ENCODE measurements at regions of chr12 and their contacts with region 1.

Region 1: DNA sequence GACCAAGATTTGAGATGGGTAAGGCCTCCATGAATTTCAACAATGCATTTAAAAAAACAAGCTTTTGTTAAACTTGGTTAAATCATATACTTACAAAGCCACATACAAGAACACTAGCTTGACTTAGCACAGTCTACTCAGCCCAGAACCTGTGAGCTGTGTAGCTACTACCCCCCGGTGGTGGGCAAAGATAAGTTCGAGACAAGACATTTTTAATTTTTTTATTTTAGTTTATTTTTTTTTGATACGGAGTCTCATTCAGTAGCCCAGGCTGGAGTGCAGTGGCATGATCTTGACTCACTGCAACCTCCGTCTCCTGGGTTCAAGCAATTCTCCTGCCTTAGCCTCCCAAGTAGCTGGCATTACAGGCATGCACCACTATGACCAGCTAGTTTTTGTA is 3.7 kb upstream of the NECAP1 start:
- DNase-seq: peak; percentile 84
- H3K4me3 ChIP-seq: no peak overlapping the region
- H3K27ac ChIP-seq: no peak overlapping the region
- H3K4me1 ChIP-seq: peaks cover 22% of the 10 kb centered on the region
- H3K27me3 ChIP-seq: no peaks in the 10 kb centered on the region
- CTCF ChIP-seq: peak; percentile 28 to 49
- POLR2A ChIP-seq: no peak

Region 2: GRCh38 chr12:7859552-7859951 is 218.8 kb before region 1 on chr12:
- CTCF ChIA-PET with region 1: interaction called, 19 read pairs
- POLR2A ChIA-PET with region 1: no interaction called
- dilution Hi-C with region 1: no loop called
- intact Hi-C with region 1: loop called (anchors 1 kb)
- DNase-seq: no peak
- H3K4me3 ChIP-seq: no peak overlapping the region
- H3K27ac ChIP-seq: no peak overlapping the region
- H3K4me1 ChIP-seq: no peaks in the 10 kb centered on the region
- H3K27me3 ChIP-seq: no peaks in the 10 kb centered on the region
- CTCF ChIP-seq: no peak
- POLR2A ChIP-seq: no peak

Region 3: DNA sequence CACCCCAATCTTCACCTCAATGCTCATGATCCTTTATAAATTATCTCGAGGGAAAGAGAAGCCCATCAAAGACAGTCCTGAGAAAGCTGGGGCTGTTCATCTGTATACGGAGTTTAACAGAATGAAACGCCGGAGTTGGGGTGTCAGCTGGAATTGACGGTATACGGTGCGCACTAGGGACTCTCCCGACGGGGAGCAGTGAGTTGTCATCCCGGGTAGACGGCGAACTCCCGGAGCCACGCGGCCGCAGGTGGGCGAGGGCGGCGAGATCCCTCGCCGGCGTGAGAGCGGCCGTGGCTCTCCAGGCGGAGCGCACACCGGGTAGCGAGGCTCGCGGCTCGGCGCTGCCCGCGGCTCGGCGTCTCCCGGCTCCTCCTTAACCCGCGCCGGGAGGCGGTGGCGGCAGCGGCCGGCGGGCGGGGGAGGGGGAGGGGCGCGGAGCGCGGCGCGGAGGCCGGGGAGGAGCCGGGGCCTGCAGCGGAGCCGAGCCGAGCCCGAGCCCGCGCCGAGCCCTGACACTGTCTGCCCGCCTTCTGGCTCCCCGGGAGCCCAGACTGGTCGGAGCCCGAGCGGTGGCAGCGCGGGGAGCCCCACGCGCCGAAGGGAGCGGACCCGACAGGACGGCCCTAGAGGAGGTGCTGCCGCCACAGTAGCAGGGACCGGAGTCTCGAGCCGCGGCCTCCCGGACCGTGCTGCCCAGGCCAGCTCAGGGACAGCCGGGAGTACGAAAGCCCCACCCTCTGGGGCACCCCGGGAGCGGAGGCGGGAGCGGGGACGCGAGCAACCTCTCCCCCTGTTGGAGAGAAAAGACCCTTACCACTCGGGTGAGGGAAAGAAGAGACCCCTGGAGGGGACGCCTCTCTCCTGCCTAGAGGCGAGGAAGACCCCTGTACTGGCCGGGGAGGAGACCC is 45.9 kb before region 1 on chr12 and contains the start of gene FOXJ2:
- CTCF ChIA-PET with region 1: interaction called, 15 read pairs
- POLR2A ChIA-PET with region 1: no interaction called
- dilution Hi-C with region 1: no loop called
- intact Hi-C with region 1: loop called (anchors 2 kb)
- DNase-seq: peak; percentile 80
- H3K4me3 ChIP-seq: peak within 1 kb of the TSS; percentile 72 to 96 (median 82)
- H3K27ac ChIP-seq: peak within 1 kb of the TSS; percentile 90
- H3K4me1 ChIP-seq: peaks cover 33% of the 10 kb centered on the region
- H3K27me3 ChIP-seq: no peaks in the 10 kb centered on the region
- CTCF ChIP-seq: no peak
- POLR2A ChIP-seq: no peak
- total RNA-seq, gene FOXJ2: 13.3 and 13.9 TPM in 2 replicates

Region 4: DNA sequence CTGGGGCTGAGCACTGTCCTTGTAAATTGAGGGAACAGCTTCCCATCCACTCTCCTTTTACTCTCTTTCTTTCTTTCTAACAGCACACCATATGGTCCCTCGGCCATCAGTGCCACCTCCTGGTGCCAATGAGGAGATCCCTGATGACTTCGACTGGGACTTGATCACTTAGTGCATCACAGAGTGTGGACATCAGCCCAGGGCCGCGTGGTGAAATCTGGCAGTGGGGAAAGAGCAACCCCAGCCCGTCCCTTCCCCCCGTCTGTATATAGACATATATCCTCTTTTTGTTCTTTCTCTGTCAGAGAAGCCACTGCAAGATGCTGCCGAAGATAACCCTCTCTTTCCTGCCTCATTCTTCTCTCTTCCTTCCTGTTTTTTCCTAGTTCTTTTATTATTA is 25.7 kb before region 1 on chr12:
- CTCF ChIA-PET with region 1: interaction called, 254 read pairs
- POLR2A ChIA-PET with region 1: no interaction called
- dilution Hi-C with region 1: no loop called
- intact Hi-C with region 1: no loop called
- DNase-seq: no peak
- H3K4me3 ChIP-seq: no peak overlapping the region
- H3K27ac ChIP-seq: no peak overlapping the region
- H3K4me1 ChIP-seq: no peaks in the 10 kb centered on the region
- H3K27me3 ChIP-seq: no peaks in the 10 kb centered on the region
- CTCF ChIP-seq: no peak
- POLR2A ChIP-seq: no peak

Region 5: GRCh38 chr12:8065991-8066594 is 12.3 kb before region 1 on chr12 and contains the start of gene C3AR1:
- CTCF ChIA-PET with region 1: interaction called, 28 read pairs
- POLR2A ChIA-PET with region 1: no interaction called
- dilution Hi-C with region 1: no loop called
- intact Hi-C with region 1: loop called (anchors 1 kb)
- DNase-seq: peak; percentile 83
- H3K4me3 ChIP-seq: peak within 1 kb of the TSS in 1 of 3 experiments; percentile 38
- H3K27ac ChIP-seq: peak within 1 kb of the TSS; percentile 48
- H3K4me1 ChIP-seq: peaks cover 15% of the 10 kb centered on the region
- H3K27me3 ChIP-seq: no peaks in the 10 kb centered on the region
- CTCF ChIP-seq: no peak
- POLR2A ChIP-seq: no peak
- total RNA-seq, gene C3AR1: 0.21 and 0.22 TPM in 2 replicates